ENCODE measurements at regions of chr3 and their contacts with region 1.

Region 1: DNA sequence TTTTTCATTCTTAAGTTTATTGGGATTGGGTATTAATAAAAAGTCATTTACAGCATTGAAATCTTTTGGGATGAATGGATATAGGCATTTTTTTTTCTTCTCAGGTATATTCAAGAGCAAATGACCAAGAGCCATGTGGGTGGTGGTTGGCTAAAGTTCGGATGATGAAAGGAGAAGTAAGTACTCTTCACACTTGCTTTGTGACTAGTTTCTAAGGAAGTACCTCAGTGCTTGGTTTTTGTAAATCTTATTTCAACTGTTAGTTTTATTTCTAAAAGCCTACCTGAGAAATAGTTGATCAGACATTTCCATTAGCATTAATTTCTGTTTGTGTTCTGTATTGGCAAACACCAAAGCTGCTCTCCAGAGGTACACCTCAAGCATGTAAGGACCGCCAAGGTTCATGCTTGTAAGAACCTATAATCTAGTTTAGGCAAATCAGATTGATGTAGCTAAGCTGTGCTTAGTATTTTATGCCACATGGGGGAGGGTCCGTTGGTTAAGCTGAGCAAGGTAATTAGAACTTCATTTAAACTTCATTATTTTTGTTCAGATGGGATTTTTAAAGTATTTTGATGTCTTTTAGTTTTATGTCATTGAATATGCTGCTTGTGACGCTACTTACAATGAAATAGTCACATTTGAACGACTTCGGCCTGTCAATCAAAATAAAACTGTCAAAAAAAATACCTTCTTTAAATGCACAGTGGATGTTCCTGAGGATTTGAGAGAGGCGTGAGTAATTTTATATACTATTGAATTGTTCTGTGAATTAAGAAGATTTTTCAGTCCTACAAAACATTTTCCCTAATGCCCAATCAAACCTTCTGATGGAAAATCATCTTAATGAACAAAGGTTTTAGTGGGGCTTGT is 35.5 kb downstream of the FXR1 start:
- DNase-seq: no peak
- ATAC-seq: no peak
- H3K4me3 Mint-ChIP-seq: no peak overlapping the region
- H3K27ac Mint-ChIP-seq: peak overlapping the region; percentile 9
- H3K4me1 Mint-ChIP-seq: peaks cover 13% of the 10 kb centered on the region
- H3K27me3 Mint-ChIP-seq: no peaks in the 10 kb centered on the region

Region 2: GRCh38 chr3:179589143-179589542 is 1358.9 kb before region 1 on chr3:
- CTCF ChIA-PET with region 1: no interaction called
- POLR2A ChIA-PET with region 1: no interaction called
- intact Hi-C with region 1: loop called in 1 of 2 experiments (anchors 10 kb)
- DNase-seq: no peak
- ATAC-seq: peak; percentile 87
- H3K4me3 Mint-ChIP-seq: no peak overlapping the region
- H3K27ac Mint-ChIP-seq: peak overlapping the region; percentile 14
- H3K4me1 Mint-ChIP-seq: peaks cover 11% of the 10 kb centered on the region
- H3K27me3 Mint-ChIP-seq: no peaks in the 10 kb centered on the region

Region 3: DNA sequence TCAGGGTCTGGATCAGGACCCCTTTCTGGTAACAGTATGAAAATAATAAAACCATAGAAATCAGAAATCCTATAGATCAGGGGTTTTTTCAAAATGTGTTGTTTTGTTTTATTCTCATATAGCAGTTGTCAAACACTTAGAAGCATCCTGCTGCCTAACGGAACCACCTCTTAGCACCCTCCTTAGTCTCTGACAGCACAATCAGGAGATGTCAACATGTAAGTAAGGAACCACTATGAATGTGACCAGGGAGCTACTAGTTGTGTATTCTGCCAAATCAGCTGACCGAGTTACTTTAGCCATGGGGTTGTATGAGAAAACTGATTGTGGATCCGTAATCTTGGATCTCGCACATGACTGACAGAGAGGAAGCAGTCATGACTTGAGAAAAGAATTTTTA is 290.9 kb before region 1 on chr3:
- CTCF ChIA-PET with region 1: no interaction called
- POLR2A ChIA-PET with region 1: no interaction called
- intact Hi-C with region 1: no loop called
- DNase-seq: no peak
- ATAC-seq: no peak
- H3K4me3 Mint-ChIP-seq: no peak overlapping the region
- H3K27ac Mint-ChIP-seq: no peak overlapping the region
- H3K4me1 Mint-ChIP-seq: no peaks in the 10 kb centered on the region
- H3K27me3 Mint-ChIP-seq: peaks cover 14% of the 10 kb centered on the region

Region 4: DNA sequence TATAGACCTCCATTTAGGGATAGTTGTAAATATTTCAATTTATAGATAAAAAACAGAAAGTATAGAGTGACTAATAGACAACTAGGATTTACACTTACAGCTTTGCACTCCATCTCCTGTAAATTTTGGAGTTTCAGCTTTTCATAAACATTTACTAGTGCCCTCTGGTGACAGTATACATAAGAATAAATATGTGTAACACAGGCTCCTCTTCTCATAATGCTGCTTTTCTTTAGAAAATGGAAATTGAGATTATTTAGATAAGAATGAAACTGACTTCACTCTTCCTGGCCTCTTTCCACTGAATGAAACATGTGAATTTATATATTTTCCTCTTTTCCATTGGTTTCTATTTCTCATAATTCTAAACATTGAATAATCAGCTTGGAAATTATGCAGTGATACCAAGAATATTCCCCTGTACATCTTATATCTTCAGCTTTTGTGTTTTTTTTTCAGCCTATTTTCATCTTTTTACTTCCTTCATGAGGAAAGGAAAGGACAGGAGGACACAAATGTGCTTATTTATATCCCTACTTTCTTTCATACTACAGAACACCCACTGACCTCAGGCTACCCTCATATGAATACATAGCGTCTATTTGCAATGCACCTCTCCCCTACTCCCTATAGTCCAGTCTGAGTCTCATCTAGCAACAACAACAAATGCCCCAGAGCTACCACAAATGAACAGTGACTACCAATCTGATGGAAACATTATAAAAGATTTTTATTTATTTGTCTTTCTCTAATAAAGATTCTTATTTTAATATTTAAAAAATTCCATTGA is 165.6 kb before region 1 on chr3:
- CTCF ChIA-PET with region 1: no interaction called
- POLR2A ChIA-PET with region 1: no interaction called
- intact Hi-C with region 1: no loop called
- DNase-seq: no peak
- ATAC-seq: no peak
- H3K4me3 Mint-ChIP-seq: no peak overlapping the region
- H3K27ac Mint-ChIP-seq: no peak overlapping the region
- H3K4me1 Mint-ChIP-seq: no peaks in the 10 kb centered on the region
- H3K27me3 Mint-ChIP-seq: no peaks in the 10 kb centered on the region

Region 5: DNA sequence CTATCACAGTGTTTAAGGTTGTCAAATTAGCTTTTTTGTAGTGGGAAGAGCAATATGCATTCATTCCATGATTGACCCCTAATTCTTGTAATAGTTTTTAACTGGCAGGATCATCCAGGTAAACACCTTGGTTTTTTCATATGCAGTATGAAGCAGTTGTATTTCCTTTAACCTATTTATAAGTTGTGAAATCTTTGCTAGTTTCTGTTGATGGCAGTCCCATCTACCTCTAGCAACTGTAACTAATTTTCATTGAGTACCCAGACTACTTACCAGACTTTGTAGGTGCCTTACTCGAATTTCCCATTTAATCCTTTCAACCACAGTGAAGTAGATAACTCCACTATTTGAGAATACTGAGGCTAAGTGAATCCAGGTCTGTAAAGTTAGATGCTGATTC is 29.5 kb before region 1 on chr3:
- CTCF ChIA-PET with region 1: no interaction called
- POLR2A ChIA-PET with region 1: no interaction called
- intact Hi-C with region 1: loop called in 1 of 2 experiments (anchors 5 kb)
- DNase-seq: no peak
- ATAC-seq: no peak
- H3K4me3 Mint-ChIP-seq: no peak overlapping the region
- H3K27ac Mint-ChIP-seq: no peak overlapping the region
- H3K4me1 Mint-ChIP-seq: peaks cover 74% of the 10 kb centered on the region
- H3K27me3 Mint-ChIP-seq: no peaks in the 10 kb centered on the region

Measured in activated CD4-positive, alpha-beta T cell treated with anti-CD3 and anti-CD28 coated beads for 36 hours (primary cell).